Gastrocnemius medialis (tissue), 4 donors: ENCODE measurements at regions of chr5 and their contacts with region 1.

Region 1: GRCh38 chr5:137867664-137868063 is at the start of gene MYOT:
- DNase-seq: peak; percentile 70 to 78
- ATAC-seq: peak; percentile 72 to 75
- H3K4me3 ChIP-seq: peak within 1 kb of the TSS; percentile 48 to 68 (median 54)
- H3K27ac ChIP-seq: peak within 1 kb of the TSS; percentile 87 to 97 (median 90)
- H3K4me1 ChIP-seq: peaks cover 21 to 28% of the 10 kb centered on the region in 2 donors
- H3K27me3 ChIP-seq: no peaks in the 10 kb centered on the region
- CTCF ChIP-seq: peak in 1 of 5 experiments; percentile 45
- POLR2A ChIP-seq: peak; percentile 96 to 99
- total RNA-seq, gene MYOT: 99.0 to 801 (median 294) TPM

Region 2: DNA sequence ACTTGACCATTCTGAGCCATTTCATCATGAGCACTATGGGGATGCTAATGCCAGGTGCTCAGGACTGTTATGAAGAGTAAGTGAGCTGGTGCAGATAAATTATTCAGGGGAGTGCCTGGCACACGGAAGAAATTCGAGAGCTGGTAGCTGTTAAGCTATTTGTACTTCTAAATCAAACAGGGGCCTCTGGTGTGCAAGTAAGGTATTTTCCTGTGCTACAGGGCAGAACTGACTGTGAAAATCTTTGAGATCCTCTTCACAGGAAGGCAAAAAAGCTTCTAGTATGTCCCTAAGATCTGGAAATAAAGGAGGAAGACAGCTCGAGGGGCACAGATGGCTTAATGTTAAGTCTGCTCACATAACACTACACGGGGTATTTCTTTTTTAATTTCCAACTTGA is 262.3 kb before region 1 on chr5:
- in situ Hi-C with region 1: no loop called
- intact Hi-C with region 1: no loop called
- DNase-seq: no peak
- ATAC-seq: no peak
- H3K4me3 ChIP-seq: no peak overlapping the region
- H3K27ac ChIP-seq: no peak overlapping the region
- H3K4me1 ChIP-seq: no peaks in the 10 kb centered on the region
- H3K27me3 ChIP-seq: no peaks in the 10 kb centered on the region
- CTCF ChIP-seq: no peak
- POLR2A ChIP-seq: no peak

Region 3: DNA sequence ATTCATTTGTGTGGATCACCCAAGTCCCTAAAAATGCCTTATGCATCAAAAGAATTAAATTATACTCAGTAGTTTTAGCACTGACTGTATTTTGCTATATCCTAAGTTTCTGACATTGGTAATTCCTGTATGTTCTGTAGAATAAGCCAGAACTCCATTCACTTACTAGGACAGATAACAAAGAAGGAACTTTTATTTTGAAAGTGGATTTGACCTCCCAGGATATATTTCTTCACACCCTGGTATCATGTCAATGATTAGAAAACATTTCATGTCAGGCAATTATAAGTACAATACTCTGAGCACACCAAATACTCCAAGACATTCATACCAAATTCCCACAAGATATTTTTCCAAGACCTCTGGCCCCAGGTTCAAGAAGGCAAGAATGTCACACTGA is 28.7 kb before region 1 on chr5:
- in situ Hi-C with region 1: no loop called
- intact Hi-C with region 1: loop called (anchors 1 kb)
- DNase-seq: no peak
- ATAC-seq: peak in 1 of 2 donors; percentile 21
- H3K4me3 ChIP-seq: peak overlapping the region in 1 of 4 donors; percentile 11
- H3K27ac ChIP-seq: peak overlapping the region; percentile 92 to 94 (median 93)
- H3K4me1 ChIP-seq: peaks cover 61 to 68% of the 10 kb centered on the region in 2 donors
- H3K27me3 ChIP-seq: no peaks in the 10 kb centered on the region
- CTCF ChIP-seq: no peak
- POLR2A ChIP-seq: no peak